HepG2 (cell line): ENCODE measurements at regions of chr3 and their contacts with region 1.

Region 1: GRCh38 chr3:17810759-17811158 is 68.3 kb upstream of the TBC1D5 start:
- DNase-seq: peak; percentile 15
- ATAC-seq: peak; percentile 59; the same call in 2 of the 3 replicates
- H3K4me3 ChIP-seq: no peak overlapping the region
- H3K27ac ChIP-seq: no peak overlapping the region
- H3K4me1 ChIP-seq: no peaks in the 10 kb centered on the region
- H3K27me3 ChIP-seq: peaks cover 0 to 8% of the 10 kb centered on the region in 2 experiments; a peak in 1 of 5 replicates
- CTCF ChIP-seq: peak; percentile 58
- EP300 ChIP-seq: peak in 1 of 2 experiments; percentile 17; a peak in 1 of 4 replicates
- POLR2A ChIP-seq: no peak
- RAD21 ChIP-seq: no peak

Region 2: GRCh38 chr3:17747174-17747889 is 63.4 kb before region 1 on chr3:
- CTCF ChIA-PET with region 1: no interaction called
- POLR2A ChIA-PET with region 1: no interaction called
- in situ Hi-C with region 1: no loop called
- intact Hi-C with region 1: loop called (anchors 2 kb)
- DNase-seq: peak; percentile 57
- ATAC-seq: no peak
- H3K4me3 ChIP-seq: peak overlapping the region; percentile 26 to 48 (median 30)
- H3K27ac ChIP-seq: peak overlapping the region; percentile 41
- H3K4me1 ChIP-seq: peaks cover 59% of the 10 kb centered on the region
- H3K27me3 ChIP-seq: no peaks in the 10 kb centered on the region; a peak in 1 of 5 replicates
- CTCF ChIP-seq: no peak
- EP300 ChIP-seq: no peak
- POLR2A ChIP-seq: no peak
- RAD21 ChIP-seq: no peak

Region 3: DNA sequence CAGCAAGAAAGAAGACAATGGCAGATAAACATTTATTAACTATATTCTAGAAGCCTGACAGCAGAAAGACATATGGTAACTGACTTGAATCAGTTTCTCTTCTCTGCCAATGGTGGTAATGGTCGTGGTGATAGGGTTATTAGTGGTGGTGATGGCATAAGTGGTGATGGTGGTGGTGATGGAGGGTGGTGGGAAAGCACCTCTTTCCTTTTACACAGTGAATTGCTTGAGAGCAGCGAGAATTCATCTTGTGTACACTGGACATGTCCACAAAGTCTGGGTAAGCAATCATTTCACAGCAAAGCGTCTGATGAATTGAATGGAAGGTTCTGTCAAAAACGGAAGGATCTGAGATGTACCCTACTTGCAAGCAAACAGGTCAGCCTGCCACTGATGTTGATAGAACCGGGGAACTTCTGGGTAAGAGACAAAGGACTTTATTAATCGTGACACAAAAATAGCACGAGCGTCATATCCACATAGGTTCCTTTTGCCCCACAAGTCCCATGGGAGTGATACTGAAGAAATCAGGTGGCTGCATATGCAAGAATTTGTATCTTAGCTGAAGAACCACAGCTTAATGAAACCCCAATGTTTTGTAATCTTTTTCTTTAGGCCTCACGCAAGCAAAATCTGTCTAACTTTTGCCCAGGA is 44.8 kb before region 1 on chr3:
- CTCF ChIA-PET with region 1: no interaction called
- POLR2A ChIA-PET with region 1: no interaction called
- in situ Hi-C with region 1: no loop called
- intact Hi-C with region 1: no loop called
- DNase-seq: no peak
- ATAC-seq: no peak
- H3K4me3 ChIP-seq: no peak overlapping the region
- H3K27ac ChIP-seq: no peak overlapping the region
- H3K4me1 ChIP-seq: 0 out of 2 replicates have a peak, but pooled peaks cover under 1% of the 10 kb centered on the region
- H3K27me3 ChIP-seq: no peaks in the 10 kb centered on the region
- CTCF ChIP-seq: no peak
- EP300 ChIP-seq: no peak
- POLR2A ChIP-seq: no peak
- RAD21 ChIP-seq: no peak

Region 4: GRCh38 chr3:17850448-17850847 is 39.7 kb after region 1 on chr3:
- CTCF ChIA-PET with region 1: no interaction called
- POLR2A ChIA-PET with region 1: no interaction called
- in situ Hi-C with region 1: no loop called
- intact Hi-C with region 1: no loop called
- DNase-seq: no peak
- ATAC-seq: no peak
- H3K4me3 ChIP-seq: no peak overlapping the region
- H3K27ac ChIP-seq: no peak overlapping the region
- H3K4me1 ChIP-seq: no peaks in the 10 kb centered on the region
- H3K27me3 ChIP-seq: no peaks in the 10 kb centered on the region; a peak in 1 of 5 replicates
- CTCF ChIP-seq: no peak
- EP300 ChIP-seq: no peak
- POLR2A ChIP-seq: no peak
- RAD21 ChIP-seq: no peak

Region 5: GRCh38 chr3:17915341-17915740 is 104.6 kb after region 1 on chr3:
- CTCF ChIA-PET with region 1: no interaction called
- POLR2A ChIA-PET with region 1: no interaction called
- in situ Hi-C with region 1: no loop called
- intact Hi-C with region 1: no loop called
- DNase-seq: no peak
- ATAC-seq: no peak
- H3K4me3 ChIP-seq: no peak overlapping the region
- H3K27ac ChIP-seq: no peak overlapping the region
- H3K4me1 ChIP-seq: no peaks in the 10 kb centered on the region
- H3K27me3 ChIP-seq: peaks cover 0 to 3% of the 10 kb centered on the region in 2 experiments; a peak in 1 of 5 replicates
- CTCF ChIP-seq: no peak
- EP300 ChIP-seq: no peak
- POLR2A ChIP-seq: no peak
- RAD21 ChIP-seq: no peak